ENCODE measurements at regions of chr14 and their contacts with region 1.

Region 1: DNA sequence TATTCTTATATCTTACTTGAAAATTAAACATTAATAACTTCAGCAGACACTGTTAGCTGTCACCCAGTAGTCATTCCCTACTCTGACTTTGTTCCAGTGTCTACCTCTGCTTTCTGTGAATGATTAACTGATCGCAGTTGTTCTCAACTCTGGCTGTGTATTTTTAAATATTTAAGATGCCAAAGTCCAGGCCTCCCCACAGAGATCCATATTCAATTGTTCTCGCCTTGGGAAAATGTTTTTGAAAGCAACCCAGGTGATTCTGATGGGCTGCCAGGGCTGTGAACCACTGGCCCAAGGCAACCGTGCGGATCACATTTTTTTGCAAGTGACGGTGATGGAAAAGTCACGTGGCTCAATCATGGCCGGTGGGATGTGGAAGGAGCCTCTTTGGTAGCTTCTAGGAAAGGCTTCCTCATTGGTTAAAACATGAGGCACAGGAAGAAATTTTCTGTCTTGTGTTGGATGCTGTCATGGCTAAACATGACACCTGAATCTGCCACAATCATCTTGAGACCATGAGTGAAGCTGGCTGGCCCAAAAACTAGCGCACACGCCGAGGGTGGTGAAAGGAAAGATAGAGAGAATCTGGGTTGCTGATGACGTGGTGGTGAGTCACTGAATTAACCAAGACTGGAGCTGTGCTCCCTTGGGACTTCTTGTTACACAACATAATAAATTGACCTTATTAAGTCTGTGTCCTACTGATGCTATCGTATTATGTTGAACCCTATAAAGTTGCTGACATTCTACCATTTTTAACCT is 37.2 kb downstream of the RDH12 start:
- DNase-seq: peak; percentile 94
- ATAC-seq: peak; percentile 97
- H3K4me3 ChIP-seq: peak overlapping the region in 2 of 3 experiments; percentile 1 to 55; a peak in 3 of 6 replicates
- H3K27ac ChIP-seq: peak overlapping the region; percentile 79
- H3K4me1 ChIP-seq: peaks cover 44% of the 10 kb centered on the region
- H3K27me3 ChIP-seq: no peaks in the 10 kb centered on the region
- CTCF ChIP-seq: no peak
- EP300 ChIP-seq: peak in 1 of 2 experiments; percentile 45; a peak in 1 of 4 replicates
- POLR2A ChIP-seq: 0 out of 4 replicates have a peak, but pooled peaks of 1 of the 2 experiments have one; percentile 23
- RAD21 ChIP-seq: no peak

Region 2: DNA sequence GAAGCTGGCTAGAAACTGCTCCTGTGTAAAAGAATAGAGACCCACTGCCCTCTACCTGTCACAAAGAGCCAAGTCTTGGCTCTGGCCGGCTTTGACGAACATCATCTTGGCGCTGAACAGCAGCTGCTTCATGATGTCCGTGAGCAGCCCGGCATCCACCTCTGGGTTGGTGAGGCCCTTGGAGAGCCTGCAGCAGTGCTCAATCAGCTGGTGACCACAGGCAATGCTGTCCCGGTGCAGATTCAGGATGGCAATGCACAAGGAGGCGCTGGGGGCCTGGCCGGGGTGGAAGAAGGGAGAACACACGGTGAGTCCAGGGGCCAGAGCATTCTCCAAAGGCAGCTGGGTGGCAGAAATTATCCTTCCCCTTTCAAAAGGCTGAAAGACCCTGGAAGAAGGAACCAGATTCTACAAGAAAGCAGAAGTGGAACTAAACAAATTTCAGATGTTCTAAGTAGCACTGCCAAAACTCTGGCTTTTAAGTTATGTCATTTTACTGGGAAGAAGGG is 27.3 kb after region 1 on chr14:
- CTCF ChIA-PET with region 1: no interaction called
- POLR2A ChIA-PET with region 1: no interaction called
- in situ Hi-C with region 1: no loop called
- intact Hi-C with region 1: loop called (anchors 1 kb)
- DNase-seq: no peak
- ATAC-seq: peak; percentile 39; the same call in 2 of the 3 replicates
- H3K4me3 ChIP-seq: no peak overlapping the region
- H3K27ac ChIP-seq: no peak overlapping the region
- H3K4me1 ChIP-seq: peaks cover 18% of the 10 kb centered on the region
- H3K27me3 ChIP-seq: no peaks in the 10 kb centered on the region
- CTCF ChIP-seq: peak; percentile 43
- EP300 ChIP-seq: no peak
- POLR2A ChIP-seq: no peak
- RAD21 ChIP-seq: no peak

Region 3: DNA sequence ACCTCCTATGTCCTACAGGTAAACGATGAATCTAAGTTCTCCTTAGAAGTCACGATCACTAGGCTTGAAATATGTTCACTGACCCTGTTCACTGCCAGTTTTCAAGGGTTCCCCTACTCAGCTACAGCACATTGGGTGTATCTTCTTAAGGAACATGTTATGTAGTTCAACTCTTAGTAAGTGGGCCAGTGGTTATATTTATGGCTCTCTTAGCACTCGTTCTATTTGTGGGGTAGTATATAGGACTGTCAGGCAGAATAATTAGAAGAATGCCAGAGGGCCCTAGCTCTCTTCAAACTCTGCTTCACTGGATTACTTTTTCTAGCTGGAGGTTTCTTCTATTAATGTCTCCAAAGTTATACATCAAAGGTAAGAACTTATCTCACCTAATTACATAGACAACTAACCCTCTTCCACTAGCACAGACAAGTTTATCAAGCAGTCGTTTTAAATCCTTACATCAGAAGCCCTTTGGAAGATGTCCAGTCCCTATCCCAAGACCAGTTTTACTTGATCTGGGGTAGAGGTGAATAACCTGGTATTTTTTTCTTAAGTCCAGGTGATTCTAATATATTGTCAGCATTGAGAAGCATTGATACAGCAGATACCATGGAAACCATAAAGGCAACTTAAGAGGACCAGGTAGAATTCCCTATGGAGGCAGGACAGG is 37.9 kb after region 1 on chr14:
- CTCF ChIA-PET with region 1: no interaction called
- POLR2A ChIA-PET with region 1: no interaction called
- in situ Hi-C with region 1: no loop called
- intact Hi-C with region 1: no loop called
- DNase-seq: no peak
- ATAC-seq: no peak
- H3K4me3 ChIP-seq: no peak overlapping the region
- H3K27ac ChIP-seq: no peak overlapping the region
- H3K4me1 ChIP-seq: no peaks in the 10 kb centered on the region
- H3K27me3 ChIP-seq: no peaks in the 10 kb centered on the region
- CTCF ChIP-seq: no peak
- EP300 ChIP-seq: no peak
- POLR2A ChIP-seq: no peak
- RAD21 ChIP-seq: no peak

Measured in HepG2 (cell line).